ENCODE measurements at regions of chr9 and their contacts with region 1.

Region 1: DNA sequence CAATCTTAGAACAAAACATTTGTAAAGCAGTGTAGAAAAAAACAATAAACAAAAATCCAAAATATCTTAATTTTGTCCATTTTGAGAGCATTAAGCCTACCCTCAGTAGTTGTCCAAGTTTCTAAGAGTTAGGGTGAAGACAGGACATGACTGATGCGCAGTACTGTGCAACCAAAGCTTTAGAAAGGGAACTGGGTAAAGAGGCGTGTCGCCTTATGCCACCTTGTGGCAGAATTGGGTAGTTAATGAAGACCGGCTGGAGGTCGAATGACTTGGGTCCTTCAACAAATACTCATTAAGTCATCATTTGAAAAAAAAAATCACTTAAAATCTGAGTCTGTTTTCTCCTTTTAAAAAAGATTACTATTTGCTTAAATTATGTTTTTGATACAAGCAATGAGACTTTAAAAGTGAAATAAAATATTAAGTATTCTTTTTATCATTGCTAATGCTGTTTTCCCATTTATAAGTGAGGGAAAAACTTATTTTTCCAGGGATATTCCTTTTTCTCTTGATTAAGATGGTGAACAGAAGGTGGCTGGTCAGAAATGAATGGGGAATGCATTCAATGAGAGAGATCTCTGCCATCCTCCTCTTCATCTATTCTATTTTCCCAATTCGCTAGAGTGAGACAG is 3.5 kb upstream of the RNF20 start:
- DNase-seq: peak; percentile 69 to 79
- ATAC-seq: peak; percentile 62; a peak in 5 of 6 replicates
- H3K4me3 ChIP-seq: no peak overlapping the region
- H3K27ac ChIP-seq: no peak overlapping the region
- H3K4me1 ChIP-seq: peaks cover 5% of the 10 kb centered on the region
- CTCF ChIP-seq: peak; percentile 89
- EP300 ChIP-seq: no peak
- POLR2A ChIP-seq: no peak
- RAD21 ChIP-seq: peak; percentile 76 to 78

Region 2: GRCh38 chr9:101119206-101119819 is 410.9 kb before region 1 on chr9:
- CTCF ChIA-PET with region 1: interaction called, 11 read pairs
- POLR2A ChIA-PET with region 1: no interaction called
- DNase-seq: peak; percentile 33 to 58
- ATAC-seq: peak; percentile 99 to 100
- H3K4me3 ChIP-seq: no peak overlapping the region
- H3K27ac ChIP-seq: no peak overlapping the region
- H3K4me1 ChIP-seq: no peaks in the 10 kb centered on the region
- CTCF ChIP-seq: peak; percentile 81
- EP300 ChIP-seq: no peak
- POLR2A ChIP-seq: no peak
- RAD21 ChIP-seq: peak; percentile 87 to 88

Region 3: DNA sequence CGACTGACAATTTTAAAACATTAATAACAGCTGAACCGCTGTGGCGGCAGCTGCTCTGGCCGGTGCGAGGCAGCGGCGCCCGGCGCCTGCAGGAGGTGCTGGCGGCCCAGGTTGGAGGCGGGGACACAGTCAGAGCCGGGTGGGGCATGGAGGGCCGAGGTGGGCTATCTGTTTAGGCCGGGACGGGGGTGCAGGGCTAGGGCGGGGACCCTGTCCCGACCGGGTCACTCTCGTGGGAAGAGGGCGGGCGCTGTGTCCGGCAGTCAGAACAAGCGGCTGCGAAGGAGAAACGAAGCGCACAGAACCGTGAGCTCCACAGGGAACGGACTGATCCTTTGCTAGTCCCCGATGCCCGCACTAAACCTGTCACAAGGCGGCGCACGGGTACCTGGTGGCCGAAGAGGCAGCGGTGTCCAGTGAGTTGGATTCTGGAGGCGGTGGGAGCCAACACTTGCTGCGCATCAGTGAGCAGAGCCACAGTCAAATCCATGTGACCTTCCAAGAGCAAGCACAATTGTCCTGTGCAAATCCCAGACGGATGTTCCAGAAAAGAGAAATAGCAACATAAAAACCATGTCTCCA is 81.0 kb before region 1 on chr9:
- CTCF ChIA-PET with region 1: interaction called, 81 read pairs
- POLR2A ChIA-PET with region 1: no interaction called
- DNase-seq: peak; percentile 86 to 89
- ATAC-seq: peak; percentile 99 to 100
- H3K4me3 ChIP-seq: peak overlapping the region; percentile 49
- H3K27ac ChIP-seq: peak overlapping the region; percentile 85 to 92
- H3K4me1 ChIP-seq: 0 out of 3 replicates have a peak, but pooled peaks cover 4% of the 10 kb centered on the region
- CTCF ChIP-seq: peak; percentile 79
- EP300 ChIP-seq: no peak
- POLR2A ChIP-seq: no peak
- RAD21 ChIP-seq: peak; percentile 55 to 75

Region 4: DNA sequence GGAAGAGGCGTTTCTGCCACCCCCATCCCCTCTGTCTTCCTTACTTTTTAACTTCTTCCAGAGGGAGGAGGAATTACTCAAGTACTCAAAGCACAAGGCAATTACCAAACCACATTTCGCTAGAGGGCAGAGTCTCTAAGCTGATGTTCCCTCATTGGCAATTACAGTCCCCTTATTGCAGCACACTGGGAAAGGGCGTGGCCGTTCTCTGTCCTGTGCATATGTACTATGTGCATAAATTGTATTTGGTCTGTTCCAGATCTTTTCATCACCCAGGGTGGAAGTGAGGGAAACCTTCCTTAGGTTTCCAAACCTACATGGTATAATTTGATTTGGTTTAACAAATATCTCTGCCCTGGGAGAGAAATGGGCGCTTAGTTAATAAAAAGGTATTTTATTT is 64.8 kb before region 1 on chr9:
- CTCF ChIA-PET with region 1: interaction called, 178 read pairs
- POLR2A ChIA-PET with region 1: interaction called, 3 read pairs
- DNase-seq: peak; percentile 36 to 77
- ATAC-seq: peak; percentile 83 to 95
- H3K4me3 ChIP-seq: no peak overlapping the region
- H3K27ac ChIP-seq: no peak overlapping the region
- H3K4me1 ChIP-seq: peaks cover 3% of the 10 kb centered on the region; the same call in 1 of the 3 replicates
- CTCF ChIP-seq: peak; percentile 45
- EP300 ChIP-seq: no peak
- POLR2A ChIP-seq: no peak
- RAD21 ChIP-seq: peak; percentile 40 to 53; a peak in 4 of 5 replicates

Region 5: DNA sequence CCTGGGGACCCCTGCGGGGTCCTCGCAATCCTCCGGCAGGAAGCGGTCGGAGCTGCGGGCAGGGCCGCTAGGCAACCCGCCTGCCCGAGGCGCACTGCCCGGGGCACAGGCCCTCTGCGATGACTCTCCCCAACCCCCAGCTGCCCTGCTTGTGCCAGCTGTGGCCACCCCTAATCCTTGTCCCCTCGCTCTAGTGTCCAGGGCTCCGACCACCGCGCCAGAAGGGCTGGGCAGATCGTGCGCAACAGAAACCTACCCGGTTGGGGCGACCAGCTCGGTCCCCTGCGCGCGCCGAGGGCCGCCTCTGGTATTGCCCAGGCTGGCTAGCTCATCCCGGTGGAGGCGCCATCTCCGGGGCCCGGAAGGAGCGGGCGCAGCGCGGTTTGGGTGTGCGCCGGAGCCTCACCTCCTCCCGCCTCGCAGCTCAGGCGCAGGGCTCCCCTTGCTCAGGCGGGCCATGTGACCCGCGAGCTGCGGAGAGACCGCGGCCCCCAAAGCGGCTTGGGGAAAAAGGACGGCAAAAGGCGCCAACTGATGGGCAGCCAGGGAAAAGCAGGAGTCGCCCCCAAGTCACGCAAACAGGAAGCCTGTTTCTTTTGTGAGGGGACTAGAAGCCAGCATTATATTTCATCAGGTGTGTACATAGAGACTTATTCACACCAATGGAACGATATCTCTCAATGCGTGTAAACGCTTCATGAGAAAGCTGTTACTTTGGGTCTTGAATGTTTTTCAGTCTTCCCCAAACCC is 43.3 kb before region 1 on chr9:
- CTCF ChIA-PET with region 1: interaction called, 27 read pairs
- POLR2A ChIA-PET with region 1: interaction called, 19 read pairs
- DNase-seq: peak; percentile 73 to 81
- ATAC-seq: peak; percentile 93 to 96
- H3K4me3 ChIP-seq: peak overlapping the region; percentile 73
- H3K27ac ChIP-seq: peak overlapping the region; percentile 86 to 97
- H3K4me1 ChIP-seq: peaks cover 10% of the 10 kb centered on the region; the same call in 2 of the 3 replicates
- CTCF ChIP-seq: peak; percentile 39
- EP300 ChIP-seq: no peak
- POLR2A ChIP-seq: peak; percentile 62
- RAD21 ChIP-seq: peak; percentile 39 to 53; a peak in 4 of 5 replicates

Region 6: DNA sequence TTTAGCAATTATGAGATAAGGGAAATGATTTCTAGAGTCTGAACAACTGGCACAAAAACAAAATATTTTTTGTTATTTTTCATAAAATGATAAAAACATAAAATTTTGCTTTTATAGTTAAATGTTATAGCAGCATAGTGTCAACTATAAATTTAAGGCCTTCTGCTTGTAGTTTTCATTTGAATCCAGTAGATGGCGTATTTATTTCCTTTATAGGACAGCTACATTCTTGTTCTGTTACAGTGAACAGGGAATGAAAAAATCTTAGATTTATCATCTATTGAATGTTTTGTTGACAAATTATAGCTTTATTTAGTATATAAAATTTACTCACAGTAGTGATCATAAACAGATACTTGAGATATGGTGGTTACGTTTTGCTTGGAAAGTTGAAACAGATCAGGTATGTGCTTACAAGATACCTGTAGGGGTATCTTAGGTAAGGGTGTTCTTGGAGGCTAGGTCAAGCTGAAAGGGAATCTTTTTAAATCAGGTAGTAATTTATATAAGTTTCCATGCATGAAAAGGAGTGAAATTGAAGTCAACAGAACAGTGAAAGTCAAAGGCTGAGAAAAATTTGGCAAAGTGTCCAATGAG is 447.5 kb after region 1 on chr9:
- CTCF ChIA-PET with region 1: no interaction called
- POLR2A ChIA-PET with region 1: no interaction called
- DNase-seq: peak in 1 of 2 experiments; percentile 20
- ATAC-seq: peak in 1 of 2 experiments; percentile 81; a peak in 3 of 6 replicates
- H3K4me3 ChIP-seq: no peak overlapping the region
- H3K27ac ChIP-seq: no peak overlapping the region
- H3K4me1 ChIP-seq: no peaks in the 10 kb centered on the region
- CTCF ChIP-seq: peak; percentile 42; the same call in 2 of the 3 replicates
- EP300 ChIP-seq: no peak
- POLR2A ChIP-seq: no peak
- RAD21 ChIP-seq: peak; percentile 53